H1 (cell line): ENCODE measurements at regions of chr3 and their contacts with region 1.

Region 1: DNA sequence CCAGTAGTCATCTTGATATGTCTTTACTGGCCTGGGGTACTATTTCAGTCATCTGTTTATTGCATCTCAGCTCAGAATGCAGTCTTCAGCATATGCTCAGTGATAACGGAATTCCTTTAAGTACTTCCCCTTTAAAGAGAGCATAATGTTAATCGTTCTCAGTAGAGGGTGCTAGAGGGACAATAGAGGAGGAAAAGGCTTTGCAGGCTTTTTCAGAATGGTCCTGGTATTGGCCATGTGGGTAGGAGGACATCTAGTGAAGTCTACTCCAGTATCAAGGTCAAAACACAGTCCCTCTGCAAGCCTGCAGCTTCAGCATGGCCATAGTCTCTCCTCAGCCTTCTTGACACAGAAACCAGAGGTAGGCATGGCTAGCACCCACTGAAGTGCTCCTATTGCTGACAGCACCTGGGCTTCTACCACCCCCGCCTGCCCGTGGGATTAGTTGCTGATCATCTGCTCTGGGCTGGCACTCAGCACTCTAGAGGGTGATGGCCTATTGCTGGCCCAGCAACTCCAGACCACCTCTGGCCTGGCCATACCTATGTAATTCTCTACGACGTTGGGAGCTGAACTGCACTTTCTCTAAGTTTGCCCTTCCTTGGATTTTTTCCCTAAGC is 65.4 kb downstream of the KCNH8 start:
- DNase-seq: no peak
- H3K4me3 ChIP-seq: no peak overlapping the region
- H3K27ac ChIP-seq: no peak overlapping the region
- H3K4me1 ChIP-seq: peaks cover 0 to 4% (median 2%) of the 10 kb centered on the region in 4 experiments; a peak in 2 of 7 replicates
- H3K27me3 ChIP-seq: no peaks in the 10 kb centered on the region
- CTCF ChIP-seq: peak in 2 of 3 experiments; percentile 37 to 51; a peak in 2 of 4 replicates
- EP300 ChIP-seq: no peak
- POLR2A ChIP-seq: no peak
- RAD21 ChIP-seq: peak; percentile 65 to 69

Region 2: DNA sequence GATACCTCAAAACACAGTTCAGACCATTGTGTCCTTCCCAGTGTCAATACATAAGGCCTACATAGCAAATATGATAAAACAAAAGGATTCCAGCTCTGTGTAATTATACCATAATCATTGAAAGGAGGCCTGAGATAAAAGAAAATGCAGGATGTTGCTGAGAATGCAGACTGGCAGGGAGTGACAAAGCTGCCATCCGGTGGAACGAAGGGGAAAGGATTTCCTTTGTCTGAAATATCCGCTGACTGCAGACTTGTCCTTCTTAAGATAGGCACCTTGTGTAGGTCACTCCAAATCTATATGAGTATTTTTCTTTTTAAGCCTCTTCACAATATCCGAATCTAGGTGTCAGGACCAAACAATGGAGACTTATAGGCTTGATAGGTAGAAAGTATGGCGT is 42.6 kb after region 1 on chr3:
- CTCF ChIA-PET with region 1: interaction called, 18 read pairs
- POLR2A ChIA-PET with region 1: no interaction called
- DNase-seq: no peak
- H3K4me3 ChIP-seq: no peak overlapping the region
- H3K27ac ChIP-seq: no peak overlapping the region
- H3K4me1 ChIP-seq: peaks cover 0 to 2% (median 0%) of the 10 kb centered on the region in 4 experiments; a peak in 1 of 7 replicates
- H3K27me3 ChIP-seq: no peaks in the 10 kb centered on the region
- CTCF ChIP-seq: peak; percentile 38 to 58 (median 42); a peak in 3 of 4 replicates
- EP300 ChIP-seq: no peak
- POLR2A ChIP-seq: no peak
- RAD21 ChIP-seq: peak; percentile 73 to 75

Region 3: DNA sequence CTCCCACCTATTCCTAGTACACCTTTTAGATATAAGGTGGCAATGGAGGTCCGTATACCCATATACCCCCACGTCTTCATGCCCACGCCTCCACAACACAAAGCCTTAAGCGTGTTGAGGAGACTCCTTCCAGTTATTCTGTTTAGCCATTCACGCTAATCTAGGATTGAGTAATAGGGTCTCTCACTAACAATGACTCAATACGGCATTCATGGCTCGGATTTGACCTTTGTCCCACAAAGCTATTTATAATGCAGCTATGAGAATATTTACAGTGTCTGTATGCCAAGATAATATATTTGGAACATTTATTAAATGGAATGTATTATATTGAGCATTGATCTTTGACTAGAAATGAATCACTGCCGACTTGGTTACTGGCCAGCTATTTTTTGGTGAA is 150.4 kb after region 1 on chr3:
- CTCF ChIA-PET with region 1: no interaction called
- POLR2A ChIA-PET with region 1: no interaction called
- DNase-seq: no peak
- H3K4me3 ChIP-seq: no peak overlapping the region
- H3K27ac ChIP-seq: no peak overlapping the region
- H3K4me1 ChIP-seq: no peaks in the 10 kb centered on the region
- H3K27me3 ChIP-seq: no peaks in the 10 kb centered on the region
- CTCF ChIP-seq: no peak
- EP300 ChIP-seq: no peak
- POLR2A ChIP-seq: no peak
- RAD21 ChIP-seq: no peak